ENCODE measurements at regions of chr1 and their contacts with region 1.

Region 1: GRCh38 chr1:212979340-212980122 is 29.2 kb downstream of the VASH2 start:
- DNase-seq: no peak
- ATAC-seq: peak; percentile 18

Region 2: DNA sequence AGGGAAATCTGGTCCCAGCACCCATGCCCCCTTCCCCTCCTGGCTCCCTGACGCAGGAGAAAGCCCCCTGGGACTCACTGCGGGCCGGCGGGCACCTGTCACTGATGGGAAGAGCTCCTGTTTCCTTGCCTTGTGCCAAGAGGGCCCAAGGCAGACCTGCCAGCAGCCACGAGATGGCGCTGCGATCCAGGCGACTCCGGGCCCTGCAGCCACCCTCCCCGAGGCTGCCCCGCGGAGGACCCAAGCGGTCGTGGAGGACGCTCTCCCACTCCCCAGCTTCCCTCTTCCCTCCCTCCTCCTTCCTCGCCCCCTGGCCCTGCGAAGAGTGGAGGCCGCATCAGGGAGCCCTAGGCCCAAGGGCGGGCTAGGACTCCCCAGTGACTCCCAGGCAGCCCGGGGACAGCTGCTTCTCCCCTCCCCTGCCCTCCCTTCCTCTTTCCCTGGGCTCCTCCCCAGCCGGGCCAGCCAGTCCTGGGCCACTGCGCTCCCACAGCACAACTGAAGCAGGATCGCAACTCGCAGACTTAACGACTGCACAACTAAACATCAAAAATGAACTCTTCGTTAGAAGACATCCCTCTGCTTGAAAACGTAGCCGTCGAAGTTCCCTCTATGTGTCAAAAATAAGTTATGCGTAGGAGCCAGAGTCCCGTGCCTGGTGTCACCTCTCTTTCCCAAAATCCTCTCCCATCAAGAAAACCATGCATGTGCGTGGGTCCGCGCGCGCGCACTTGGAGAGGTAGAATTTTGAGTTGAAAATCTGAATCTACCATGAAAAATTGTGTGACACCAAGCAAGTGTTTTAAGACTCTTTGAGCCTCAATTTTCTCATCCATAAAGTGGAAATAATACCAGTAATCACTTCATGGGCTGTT is 314.1 kb before region 1 on chr1:
- intact Hi-C with region 1: no loop called
- DNase-seq: peak; percentile 93
- ATAC-seq: peak; percentile 98

Region 3: DNA sequence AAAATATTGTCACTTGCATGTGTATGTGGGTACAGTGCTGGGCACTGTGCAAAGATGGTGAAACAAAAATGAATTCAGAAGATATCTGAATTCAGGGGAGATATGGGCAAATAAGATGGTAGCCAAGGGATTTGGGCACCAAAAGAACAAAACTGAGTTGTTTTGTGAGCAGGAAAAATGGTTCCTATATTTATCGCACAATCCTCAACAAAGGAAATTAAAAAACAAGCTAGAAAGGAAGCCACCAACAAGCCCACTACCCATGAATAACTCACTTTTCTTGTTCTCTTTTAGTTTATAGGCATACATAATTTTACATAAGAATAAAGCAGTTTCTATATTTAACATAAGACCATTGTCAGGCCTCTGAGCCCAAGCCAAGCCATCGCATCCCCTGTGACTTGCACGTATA is 69.9 kb before region 1 on chr1:
- intact Hi-C with region 1: no loop called
- DNase-seq: no peak
- ATAC-seq: no peak

Region 4: DNA sequence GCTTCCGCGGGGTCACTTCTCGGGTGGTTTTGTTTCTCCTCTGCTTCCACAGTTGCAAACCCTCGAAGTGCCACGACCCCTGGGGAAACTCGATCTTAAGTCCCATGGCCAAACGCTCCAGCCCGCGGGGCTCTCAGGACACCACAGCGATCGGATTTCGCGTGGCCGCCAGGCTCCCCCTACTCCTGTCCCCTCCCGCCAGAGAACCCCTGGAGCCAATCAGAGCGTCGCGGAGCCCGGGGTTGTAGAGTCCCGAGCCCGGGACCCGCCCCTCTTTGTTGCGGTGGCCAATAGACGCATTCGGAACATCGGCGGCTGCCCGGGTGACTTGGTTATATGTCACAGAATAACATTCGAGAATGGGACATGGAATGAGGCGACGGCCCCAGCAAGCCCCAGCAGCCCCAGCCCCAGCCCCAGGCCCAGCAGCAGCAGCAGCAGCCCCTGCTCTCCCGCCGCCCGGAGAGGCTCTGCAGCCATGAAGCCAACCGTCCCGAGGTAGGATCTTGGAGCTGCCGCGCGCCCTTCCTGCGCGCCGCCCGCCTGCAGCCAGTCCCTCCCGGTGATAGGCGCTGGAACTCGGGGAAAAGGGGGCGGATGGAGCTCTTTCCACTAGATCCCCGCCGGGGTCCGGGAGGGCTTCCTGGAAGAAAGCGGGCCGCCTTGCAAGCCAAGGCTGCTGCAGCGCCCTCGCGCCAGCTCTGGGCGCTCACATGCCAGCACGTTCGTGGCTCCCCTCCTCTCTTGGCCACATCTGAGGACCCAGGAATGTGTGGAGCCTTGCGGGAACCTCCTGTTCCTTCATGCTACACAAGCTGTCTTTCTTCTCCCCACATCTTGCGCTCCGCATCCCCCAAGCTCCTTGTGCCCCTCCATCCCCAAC is 29.0 kb before region 1 on chr1 and contains the start of gene VASH2:
- intact Hi-C with region 1: loop called (anchors 2 kb)
- DNase-seq: peak; percentile 93
- ATAC-seq: peak; percentile 99
- total RNA-seq, gene VASH2: 1.4 TPM

Region 5: GRCh38 chr1:213094446-213094845 is 114.9 kb after region 1 on chr1:
- intact Hi-C with region 1: no loop called
- DNase-seq: no peak
- ATAC-seq: no peak

Measured in Right ventricle myocardium inferior (tissue), 1 donor.